HCT116 (cell line): ENCODE measurements at regions of chr10 and their contacts with region 1.

Region 1: GRCh38 chr10:32795598-32796183 is 162.3 kb downstream of the ITGB1 start:
- DNase-seq: peak; percentile 16
- ATAC-seq: peak; percentile 61
- H3K4me3 ChIP-seq: no peak overlapping the region
- H3K27ac ChIP-seq: no peak overlapping the region
- H3K4me1 ChIP-seq: no peaks in the 10 kb centered on the region
- H3K27me3 ChIP-seq: no peaks in the 10 kb centered on the region
- CTCF ChIP-seq: peak; percentile 59 to 82 (median 80); a peak in 5 of 6 replicates
- POLR2A ChIP-seq: no peak
- RAD21 ChIP-seq: peak; percentile 94

Region 2: DNA sequence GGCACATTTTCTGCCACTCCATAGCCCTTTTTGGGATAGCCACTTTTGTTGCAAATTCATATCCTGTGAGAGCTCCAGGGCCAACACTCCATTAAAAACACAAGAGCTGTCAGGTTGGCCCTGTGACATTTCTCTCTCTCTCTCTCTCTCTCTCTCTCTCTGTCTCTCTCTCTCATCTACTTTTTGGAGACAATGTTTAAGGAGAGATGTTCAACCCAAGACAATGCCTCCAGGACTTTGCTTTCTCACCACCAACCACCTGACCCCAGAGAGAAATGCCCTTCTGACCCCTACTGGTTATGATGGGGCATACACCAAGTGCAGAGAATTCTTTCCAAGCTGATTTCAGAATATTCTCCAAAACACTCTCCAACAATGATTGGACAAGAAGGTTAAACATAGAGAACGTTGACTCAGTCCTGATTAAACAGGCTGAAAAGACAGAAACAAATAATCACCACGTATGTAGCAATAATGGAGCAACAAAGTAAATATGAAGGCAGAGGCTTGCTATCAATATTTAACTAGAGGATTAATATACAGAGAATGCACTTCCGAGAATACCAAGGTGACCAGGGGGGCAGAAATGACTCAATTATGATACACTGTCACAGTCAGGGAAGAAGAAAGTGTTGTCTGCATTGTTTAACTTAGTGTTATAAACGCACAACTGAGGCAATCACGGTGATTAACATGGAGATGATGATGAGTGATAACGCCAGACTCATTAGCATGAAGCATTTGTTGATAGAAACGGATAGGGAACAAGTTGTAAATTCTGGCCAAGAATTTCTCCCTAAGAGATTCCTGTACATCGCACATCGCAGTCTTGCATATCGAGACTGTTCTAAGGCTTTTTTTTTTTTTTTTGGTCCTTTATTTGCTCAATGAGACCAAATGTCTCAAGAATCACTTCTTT is 360.3 kb after region 1 on chr10:
- CTCF ChIA-PET with region 1: no interaction called
- POLR2A ChIA-PET with region 1: no interaction called
- RAD21 ChIA-PET with region 1: no interaction called
- intact Hi-C with region 1: loop called (anchors 2 kb)
- DNase-seq: no peak
- ATAC-seq: peak; percentile 97
- H3K4me3 ChIP-seq: peak overlapping the region in 1 of 2 experiments; percentile 19; a peak in 1 of 4 replicates
- H3K27ac ChIP-seq: no peak overlapping the region
- H3K4me1 ChIP-seq: peaks cover 7 to 24% of the 10 kb centered on the region in 2 experiments; a peak in 3 of 4 replicates
- H3K27me3 ChIP-seq: no peaks in the 10 kb centered on the region
- CTCF ChIP-seq: peak; percentile 74 to 77 (median 76); a peak in 5 of 6 replicates
- POLR2A ChIP-seq: no peak
- RAD21 ChIP-seq: peak; percentile 91